ENCODE measurements at regions of chr4 and their contacts with region 1.

Region 1: DNA sequence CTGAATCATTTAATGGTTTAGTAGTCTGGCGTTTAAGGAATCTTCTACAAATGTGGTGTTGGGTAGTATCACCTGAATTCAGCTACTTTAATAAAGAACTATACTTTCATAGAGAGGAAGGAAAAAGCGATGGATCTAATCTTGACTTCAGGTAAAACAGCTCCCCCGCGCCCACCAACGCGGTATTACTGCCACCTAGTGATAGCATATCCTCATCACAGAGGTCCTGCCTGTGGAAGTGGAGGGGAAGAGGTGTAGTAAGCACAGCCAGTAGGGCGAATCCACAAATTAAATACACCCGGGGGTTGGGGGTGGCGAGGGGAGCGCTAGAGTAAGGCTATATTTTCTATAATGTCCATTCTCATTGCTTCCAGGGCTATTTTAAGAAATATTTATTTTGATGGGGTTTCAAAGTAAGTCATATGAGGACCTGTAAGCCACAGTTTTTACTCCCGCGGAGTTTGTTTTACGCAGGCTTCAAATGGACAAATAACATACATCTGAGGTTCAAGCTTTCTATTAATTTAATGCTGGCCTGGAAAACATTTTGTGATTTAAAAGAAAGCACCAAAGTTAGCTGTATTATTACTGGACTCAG is 8.3 kb upstream of the DAPP1 start:
- DNase-seq: peak; percentile 45
- ATAC-seq: peak; percentile 94
- H3K4me3 Mint-ChIP-seq: peak overlapping the region; percentile 9
- H3K27ac Mint-ChIP-seq: peak overlapping the region; percentile 60
- H3K4me1 Mint-ChIP-seq: peaks cover 31% of the 10 kb centered on the region
- H3K27me3 Mint-ChIP-seq: peaks cover 10% of the 10 kb centered on the region
- CTCF ChIP-seq: peak; percentile 24

Region 2: GRCh38 chr4:99117876-99118693 is 690.3 kb before region 1 on chr4:
- CTCF ChIA-PET with region 1: no interaction called
- POLR2A ChIA-PET with region 1: no interaction called
- intact Hi-C with region 1: loop called (anchors 1 kb)
- DNase-seq: no peak
- ATAC-seq: no peak
- H3K4me3 Mint-ChIP-seq: no peak overlapping the region
- H3K27ac Mint-ChIP-seq: no peak overlapping the region
- H3K4me1 Mint-ChIP-seq: no peaks in the 10 kb centered on the region
- H3K27me3 Mint-ChIP-seq: peaks cover 2% of the 10 kb centered on the region
- CTCF ChIP-seq: no peak

Region 3: GRCh38 chr4:99352602-99353537 is 455.5 kb before region 1 on chr4 and contains the start of gene ADH1C:
- CTCF ChIA-PET with region 1: no interaction called
- POLR2A ChIA-PET with region 1: no interaction called
- intact Hi-C with region 1: no loop called
- DNase-seq: no peak
- ATAC-seq: no peak
- H3K4me3 Mint-ChIP-seq: no peak within 1 kb of the TSS
- H3K27ac Mint-ChIP-seq: no peak within 1 kb of the TSS
- H3K4me1 Mint-ChIP-seq: no peaks in the 10 kb centered on the region
- H3K27me3 Mint-ChIP-seq: no peaks in the 10 kb centered on the region
- CTCF ChIP-seq: no peak
- total RNA-seq, gene ADH1C: not detected in 2 replicates

Region 4: DNA sequence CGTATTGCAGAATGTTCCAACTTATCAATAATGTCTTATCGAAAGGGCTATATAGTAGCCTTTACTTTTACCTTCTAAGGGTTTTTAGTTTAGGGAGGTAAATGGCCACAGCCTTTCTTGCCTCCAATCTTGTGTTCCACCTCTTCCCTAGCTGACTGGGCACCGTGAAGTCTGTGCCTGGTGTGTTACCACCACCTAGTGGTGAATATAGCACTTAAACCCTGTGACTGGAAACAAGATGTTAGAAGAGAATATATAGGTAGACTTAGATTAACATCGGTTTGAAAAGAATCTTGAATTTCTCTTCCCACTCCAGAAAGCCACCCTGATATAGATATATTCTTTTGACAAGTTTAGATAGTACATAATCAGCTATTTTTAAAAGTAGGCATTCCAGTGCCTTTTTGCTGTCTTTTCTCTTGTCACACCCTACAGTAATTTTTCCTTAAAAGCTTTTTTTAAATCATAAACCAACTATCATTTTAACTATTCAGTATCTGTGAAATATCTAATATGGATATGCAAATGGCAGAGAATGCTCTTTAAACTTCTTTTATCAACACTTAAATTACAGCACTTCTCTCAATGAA is 345.4 kb before region 1 on chr4:
- CTCF ChIA-PET with region 1: interaction called, 6 read pairs
- POLR2A ChIA-PET with region 1: no interaction called
- intact Hi-C with region 1: loop called (anchors 2 kb)
- DNase-seq: no peak
- ATAC-seq: peak; percentile 64
- H3K4me3 Mint-ChIP-seq: no peak overlapping the region
- H3K27ac Mint-ChIP-seq: no peak overlapping the region
- H3K4me1 Mint-ChIP-seq: no peaks in the 10 kb centered on the region
- H3K27me3 Mint-ChIP-seq: peaks cover 10% of the 10 kb centered on the region
- CTCF ChIP-seq: no peak

Region 5: DNA sequence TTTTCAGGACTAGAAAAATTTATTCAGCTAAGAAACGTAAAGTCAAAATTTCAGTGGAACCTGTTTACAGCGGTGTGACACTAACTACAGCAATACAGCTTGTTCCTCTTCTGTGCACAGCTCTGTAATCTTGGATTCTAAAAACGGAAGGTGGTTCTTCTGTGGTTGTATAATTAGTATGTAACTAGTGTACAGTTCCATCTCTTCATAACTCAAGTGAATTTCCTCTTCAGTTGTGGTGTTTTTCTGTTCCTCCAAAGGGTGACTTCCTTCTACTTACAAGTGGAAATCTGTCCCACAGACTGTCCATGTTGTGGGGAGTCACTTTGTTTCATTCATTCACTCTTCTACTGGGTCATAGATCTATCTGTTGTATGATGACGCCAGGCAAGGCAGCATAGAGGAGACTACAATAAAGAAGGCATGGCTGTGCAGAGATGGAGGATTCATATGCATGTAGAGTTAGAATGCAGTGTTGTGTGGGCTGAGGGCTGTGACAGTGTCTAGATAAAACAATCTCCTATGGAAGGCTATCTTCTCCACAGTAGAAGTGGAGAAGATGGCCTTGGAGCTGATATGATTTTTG is 13.7 kb after region 1 on chr4:
- CTCF ChIA-PET with region 1: interaction called, 17 read pairs
- POLR2A ChIA-PET with region 1: interaction called, 14 read pairs
- intact Hi-C with region 1: loop called (anchors 1 kb)
- DNase-seq: no peak
- ATAC-seq: peak; percentile 77
- H3K4me3 Mint-ChIP-seq: peak overlapping the region; percentile 81
- H3K27ac Mint-ChIP-seq: peak overlapping the region; percentile 94
- H3K4me1 Mint-ChIP-seq: peaks cover 91% of the 10 kb centered on the region
- H3K27me3 Mint-ChIP-seq: no peaks in the 10 kb centered on the region
- CTCF ChIP-seq: no peak

Region 6: GRCh38 chr4:99855678-99856077 is 47.3 kb after region 1 on chr4:
- CTCF ChIA-PET with region 1: interaction called, 15 read pairs
- POLR2A ChIA-PET with region 1: interaction called, 3 read pairs
- intact Hi-C with region 1: no loop called
- DNase-seq: no peak
- ATAC-seq: peak; percentile 59
- H3K4me3 Mint-ChIP-seq: peak overlapping the region; percentile 33
- H3K27ac Mint-ChIP-seq: peak overlapping the region; percentile 90
- H3K4me1 Mint-ChIP-seq: peaks cover 80% of the 10 kb centered on the region
- H3K27me3 Mint-ChIP-seq: no peaks in the 10 kb centered on the region
- CTCF ChIP-seq: no peak

Region 7: GRCh38 chr4:99885063-99885664 is 76.8 kb after region 1 on chr4:
- CTCF ChIA-PET with region 1: interaction called, 57 read pairs
- POLR2A ChIA-PET with region 1: interaction called, 4 read pairs
- intact Hi-C with region 1: loop called (anchors 1 kb)
- DNase-seq: no peak
- ATAC-seq: no peak
- H3K4me3 Mint-ChIP-seq: no peak overlapping the region
- H3K27ac Mint-ChIP-seq: no peak overlapping the region
- H3K4me1 Mint-ChIP-seq: no peaks in the 10 kb centered on the region
- H3K27me3 Mint-ChIP-seq: no peaks in the 10 kb centered on the region
- CTCF ChIP-seq: no peak